ENCODE measurements at regions of chr3 and their contacts with region 1.

Region 1: DNA sequence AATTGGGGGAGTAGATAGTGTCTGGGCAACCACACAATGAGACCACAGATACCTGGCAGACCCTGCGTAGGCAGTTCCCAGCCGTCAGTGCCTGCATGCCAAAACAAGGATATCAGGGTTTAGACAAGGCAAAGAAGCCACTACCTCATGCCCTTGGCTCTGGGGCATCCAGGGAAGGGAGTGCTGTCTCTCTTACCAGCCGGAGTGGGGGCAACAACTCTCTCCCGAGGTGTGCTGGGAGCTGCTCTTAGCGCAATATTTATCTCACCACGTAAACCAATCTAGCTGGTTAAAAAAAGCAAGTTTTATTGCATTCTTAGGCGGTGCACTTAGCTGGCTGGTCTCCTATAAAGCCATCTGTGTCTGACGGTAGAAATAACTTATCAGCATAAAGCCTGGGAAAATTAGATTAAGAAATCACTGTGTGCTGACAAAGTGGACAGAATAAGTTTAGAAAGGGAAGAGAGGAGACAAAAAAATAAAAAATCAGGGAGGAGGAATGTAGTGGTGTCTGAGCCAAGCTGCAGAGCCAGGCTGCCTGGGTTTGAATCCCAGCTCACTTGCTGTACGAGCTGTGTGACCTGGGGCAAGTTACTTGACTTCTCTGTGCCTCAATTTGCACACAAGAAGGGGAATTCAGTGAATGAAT is 273.2 kb downstream of the PDZRN3 start:
- DNase-seq: no peak
- H3K4me3 ChIP-seq: no peak overlapping the region
- H3K27ac ChIP-seq: no peak overlapping the region
- H3K4me1 ChIP-seq: no peaks in the 10 kb centered on the region
- H3K27me3 ChIP-seq: no peaks in the 10 kb centered on the region
- CTCF ChIP-seq: no peak

Region 2: GRCh38 chr3:73365756-73366397 is 14.3 kb after region 1 on chr3:
- intact Hi-C with region 1: loop called (anchors 2 kb)
- DNase-seq: peak; percentile 35
- H3K4me3 ChIP-seq: no peak overlapping the region
- H3K27ac ChIP-seq: no peak overlapping the region
- H3K4me1 ChIP-seq: no peaks in the 10 kb centered on the region
- H3K27me3 ChIP-seq: no peaks in the 10 kb centered on the region
- CTCF ChIP-seq: no peak

Measured in colonic mucosa (tissue), 4 donors.